ENCODE measurements at regions of chr2 and their contacts with region 1.

Region 1: GRCh38 chr2:27303093-27304025 is 4.9 kb downstream of the UCN start:
- DNase-seq: peak; percentile 60
- H3K4me3 Mint-ChIP-seq: peak overlapping the region; percentile 62
- H3K27ac Mint-ChIP-seq: no peak overlapping the region
- H3K4me1 Mint-ChIP-seq: peaks cover 9% of the 10 kb centered on the region
- H3K27me3 Mint-ChIP-seq: peaks cover 55% of the 10 kb centered on the region

Region 2: GRCh38 chr2:26816893-26817292 is 486.5 kb before region 1 on chr2:
- CTCF ChIA-PET with region 1: no interaction called
- DNase-seq: peak; percentile 24
- H3K4me3 Mint-ChIP-seq: no peak overlapping the region
- H3K27ac Mint-ChIP-seq: no peak overlapping the region
- H3K4me1 Mint-ChIP-seq: no peaks in the 10 kb centered on the region
- H3K27me3 Mint-ChIP-seq: peaks cover 20% of the 10 kb centered on the region

Region 3: GRCh38 chr2:26942543-26943295 is 360.6 kb before region 1 on chr2:
- CTCF ChIA-PET with region 1: no interaction called
- DNase-seq: peak; percentile 75
- H3K4me3 Mint-ChIP-seq: no peak overlapping the region
- H3K27ac Mint-ChIP-seq: no peak overlapping the region
- H3K4me1 Mint-ChIP-seq: no peaks in the 10 kb centered on the region
- H3K27me3 Mint-ChIP-seq: peaks cover 33% of the 10 kb centered on the region

Region 4: GRCh38 chr2:26978061-26978596 is 325.2 kb before region 1 on chr2:
- CTCF ChIA-PET with region 1: no interaction called
- DNase-seq: no peak
- H3K4me3 Mint-ChIP-seq: no peak overlapping the region
- H3K27ac Mint-ChIP-seq: no peak overlapping the region
- H3K4me1 Mint-ChIP-seq: no peaks in the 10 kb centered on the region
- H3K27me3 Mint-ChIP-seq: peaks cover 30% of the 10 kb centered on the region

Region 5: GRCh38 chr2:27102329-27102728 is 201.0 kb before region 1 on chr2:
- CTCF ChIA-PET with region 1: interaction called, 14 read pairs
- DNase-seq: no peak
- H3K4me3 Mint-ChIP-seq: no peak overlapping the region
- H3K27ac Mint-ChIP-seq: no peak overlapping the region
- H3K4me1 Mint-ChIP-seq: no peaks in the 10 kb centered on the region
- H3K27me3 Mint-ChIP-seq: peaks cover 10% of the 10 kb centered on the region

Region 6: DNA sequence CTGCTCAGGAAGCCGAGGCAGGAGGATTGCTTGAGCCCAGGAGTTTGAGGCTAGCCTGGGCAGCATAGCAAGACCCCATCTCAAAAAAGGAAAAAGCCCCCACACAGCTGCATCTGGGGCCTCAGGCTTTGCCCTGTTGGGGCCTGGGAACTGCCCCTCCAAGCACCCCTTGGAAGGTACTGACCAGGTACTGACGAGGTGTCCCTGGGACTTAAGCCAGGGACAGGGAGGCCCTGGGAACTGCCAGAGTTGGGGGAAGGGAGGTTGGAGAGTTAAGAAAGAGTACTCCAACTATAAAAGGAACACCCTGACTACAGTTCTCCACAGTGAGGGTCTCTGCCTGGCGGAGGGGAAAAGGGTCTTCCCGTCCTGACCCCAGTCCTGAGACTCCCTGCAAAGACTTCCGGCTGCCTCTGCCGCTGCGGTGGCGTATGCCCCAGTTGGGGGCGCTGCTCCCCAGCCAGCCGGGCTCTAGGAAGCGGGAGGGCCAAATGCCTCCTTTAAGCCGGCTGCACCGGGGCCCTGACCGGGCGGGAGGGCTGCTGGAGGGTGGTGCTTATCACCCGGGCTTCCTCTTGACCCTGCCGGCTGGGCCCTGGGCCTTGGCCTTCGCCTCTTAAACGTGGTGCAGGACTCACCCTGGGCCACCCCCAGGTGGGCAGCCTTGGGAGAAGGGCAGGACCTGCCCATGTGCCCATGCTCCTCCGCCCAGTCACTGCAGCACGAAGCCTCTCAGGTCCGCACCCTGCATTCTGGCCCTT is 53.3 kb before region 1 on chr2:
- CTCF ChIA-PET with region 1: interaction called, 12 read pairs
- DNase-seq: peak; percentile 74
- H3K4me3 Mint-ChIP-seq: no peak overlapping the region
- H3K27ac Mint-ChIP-seq: no peak overlapping the region
- H3K4me1 Mint-ChIP-seq: no peaks in the 10 kb centered on the region
- H3K27me3 Mint-ChIP-seq: peaks cover 52% of the 10 kb centered on the region

Region 7: GRCh38 chr2:27291865-27292264 is 11.5 kb before region 1 on chr2:
- CTCF ChIA-PET with region 1: interaction called, 11 read pairs
- DNase-seq: no peak
- H3K4me3 Mint-ChIP-seq: no peak overlapping the region
- H3K27ac Mint-ChIP-seq: no peak overlapping the region
- H3K4me1 Mint-ChIP-seq: no peaks in the 10 kb centered on the region
- H3K27me3 Mint-ChIP-seq: peaks cover 39% of the 10 kb centered on the region